Mammary epithelial cell (primary cell): ENCODE measurements at regions of chr1 and their contacts with region 1.

Region 1: GRCh38 chr1:68232354-68233148 is at the start of gene WLS:
- DNase-seq: peak; percentile 70
- H3K4me3 ChIP-seq: peak within 1 kb of the TSS; percentile 78 to 100 (median 96)
- H3K27ac ChIP-seq: peak within 1 kb of the TSS; percentile 82
- H3K4me1 ChIP-seq: peaks cover 22% of the 10 kb centered on the region
- H3K27me3 ChIP-seq: no peaks in the 10 kb centered on the region
- CTCF ChIP-seq: no peak
- total RNA-seq, gene WLS: 93.9 to 113 TPM

Region 2: GRCh38 chr1:67832737-67833601 is 399.6 kb before region 1 on chr1 and contains the start of gene GNG12:
- CTCF ChIA-PET with region 1: no interaction called
- dilution Hi-C with region 1: no loop called
- in situ Hi-C with region 1: no loop called
- intact Hi-C with region 1: loop called (anchors 5 kb)
- DNase-seq: peak; percentile 77
- H3K4me3 ChIP-seq: peak within 1 kb of the TSS; percentile 72 to 92 (median 90)
- H3K27ac ChIP-seq: peak within 1 kb of the TSS; percentile 90
- H3K4me1 ChIP-seq: peaks cover 54% of the 10 kb centered on the region
- H3K27me3 ChIP-seq: no peaks in the 10 kb centered on the region
- CTCF ChIP-seq: no peak
- total RNA-seq, gene GNG12: 130 to 183 TPM

Region 3: GRCh38 chr1:68145418-68146126 is 87.0 kb before region 1 on chr1:
- CTCF ChIA-PET with region 1: no interaction called
- dilution Hi-C with region 1: no loop called
- in situ Hi-C with region 1: no loop called
- intact Hi-C with region 1: loop called (anchors 5 kb)
- DNase-seq: peak; percentile 62
- H3K4me3 ChIP-seq: no peak overlapping the region
- H3K27ac ChIP-seq: peak overlapping the region; percentile 7
- H3K4me1 ChIP-seq: peaks cover 32% of the 10 kb centered on the region
- H3K27me3 ChIP-seq: no peaks in the 10 kb centered on the region
- CTCF ChIP-seq: no peak

Region 4: DNA sequence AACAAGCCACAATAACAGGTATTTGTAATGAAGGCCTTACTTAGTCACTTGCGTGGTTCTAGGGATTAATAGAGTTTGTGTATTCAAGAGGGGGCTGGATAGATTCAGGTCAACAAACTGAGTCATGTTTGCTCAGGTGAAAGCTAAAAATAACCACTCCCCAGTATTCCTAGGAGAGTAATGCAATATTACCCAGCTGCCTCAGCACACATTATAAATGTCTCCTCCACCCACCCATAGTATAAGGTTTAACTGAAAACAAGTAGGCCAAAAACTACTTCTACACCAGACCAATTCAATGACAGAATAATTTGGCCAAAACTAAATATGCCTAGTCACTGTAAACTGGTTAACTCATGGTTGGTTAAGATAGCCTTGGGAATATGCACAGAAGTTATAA is 34.7 kb before region 1 on chr1:
- CTCF ChIA-PET with region 1: no interaction called
- dilution Hi-C with region 1: no loop called
- in situ Hi-C with region 1: no loop called
- intact Hi-C with region 1: loop called (anchors 5 kb)
- DNase-seq: peak; percentile 87
- H3K4me3 ChIP-seq: no peak overlapping the region
- H3K27ac ChIP-seq: no peak overlapping the region
- H3K4me1 ChIP-seq: peaks cover 17% of the 10 kb centered on the region
- H3K27me3 ChIP-seq: no peaks in the 10 kb centered on the region
- CTCF ChIP-seq: no peak

Region 5: GRCh38 chr1:68293609-68294366 is 61.2 kb after region 1 on chr1:
- CTCF ChIA-PET with region 1: no interaction called
- dilution Hi-C with region 1: no loop called
- in situ Hi-C with region 1: no loop called
- intact Hi-C with region 1: no loop called
- DNase-seq: no peak
- H3K4me3 ChIP-seq: no peak overlapping the region
- H3K27ac ChIP-seq: no peak overlapping the region
- H3K4me1 ChIP-seq: no peaks in the 10 kb centered on the region
- H3K27me3 ChIP-seq: no peaks in the 10 kb centered on the region
- CTCF ChIP-seq: no peak

Region 6: GRCh38 chr1:68331117-68331865 is 98.7 kb after region 1 on chr1:
- CTCF ChIA-PET with region 1: no interaction called
- dilution Hi-C with region 1: no loop called
- in situ Hi-C with region 1: no loop called
- intact Hi-C with region 1: loop called (anchors 5 kb)
- DNase-seq: peak; percentile 89
- H3K4me3 ChIP-seq: no peak overlapping the region
- H3K27ac ChIP-seq: no peak overlapping the region
- H3K4me1 ChIP-seq: peaks cover 16% of the 10 kb centered on the region
- H3K27me3 ChIP-seq: peaks cover 2% of the 10 kb centered on the region
- CTCF ChIP-seq: no peak